Activated T-helper 2 cell treated with anti-CD3 and anti-CD28 coated beads, Interferon-gamma antibody, Interleukin-2, Interleukin-4, amounts not matched to agents 10 μg/mL and 5 μg/mL and 100 μg/mL, durations not matched to agents 14 hours and 24 hours and 36 hours (primary cell): ENCODE measurements at regions of chr3 and their contacts with region 1.

Region 1: GRCh38 chr3:129120254-129121004 is 1.2 kb downstream of the RAB43 start:
- DNase-seq: peak; percentile 93
- H3K4me3 Mint-ChIP-seq: peak overlapping the region; percentile 94
- H3K27ac Mint-ChIP-seq: peak overlapping the region; percentile 97
- H3K4me1 Mint-ChIP-seq: peaks cover 52% of the 10 kb centered on the region
- H3K27me3 Mint-ChIP-seq: no peaks in the 10 kb centered on the region

Region 2: GRCh38 chr3:128804017-128804810 is 316.2 kb before region 1 on chr3:
- intact Hi-C with region 1: loop called (anchors 5 kb)
- DNase-seq: peak; percentile 69
- H3K4me3 Mint-ChIP-seq: peak overlapping the region; percentile 58
- H3K27ac Mint-ChIP-seq: peak overlapping the region; percentile 88
- H3K4me1 Mint-ChIP-seq: peaks cover 75% of the 10 kb centered on the region
- H3K27me3 Mint-ChIP-seq: no peaks in the 10 kb centered on the region

Region 3: GRCh38 chr3:129026728-129027543 is 93.5 kb before region 1 on chr3:
- intact Hi-C with region 1: loop called (anchors 5 kb)
- DNase-seq: peak; percentile 92
- H3K4me3 Mint-ChIP-seq: peak overlapping the region; percentile 72
- H3K27ac Mint-ChIP-seq: peak overlapping the region; percentile 76
- H3K4me1 Mint-ChIP-seq: peaks cover 13% of the 10 kb centered on the region
- H3K27me3 Mint-ChIP-seq: no peaks in the 10 kb centered on the region

Region 4: DNA sequence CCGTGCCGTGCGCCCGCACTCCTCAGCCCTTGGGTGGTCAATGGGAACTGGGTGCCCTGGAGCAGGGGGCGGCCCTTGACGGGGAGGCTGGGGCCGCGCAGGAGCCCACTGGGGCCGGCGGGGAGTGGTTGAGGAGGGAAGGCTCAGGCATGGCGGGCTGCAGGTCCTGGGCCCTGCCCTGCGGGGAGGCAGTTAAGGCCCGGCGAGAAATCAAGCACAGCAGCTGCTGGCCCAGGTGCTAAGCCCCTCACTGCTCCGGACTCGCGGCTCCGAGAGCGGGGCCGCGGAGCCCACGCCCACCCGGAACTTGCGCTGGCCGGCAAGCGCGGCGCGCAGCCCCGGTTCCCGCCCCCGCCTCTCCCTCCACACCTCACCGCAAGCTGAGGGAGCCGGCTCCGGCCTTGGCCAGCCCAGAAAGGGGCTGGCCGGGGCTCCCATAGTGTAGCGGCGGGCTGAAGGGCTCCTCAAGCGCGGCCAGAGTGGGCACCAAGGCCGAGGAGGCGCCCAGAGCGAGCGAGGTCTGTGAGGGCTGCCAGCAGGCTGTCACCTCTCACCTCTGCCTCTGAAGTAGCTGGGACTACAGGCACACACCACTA is 52.0 kb before region 1 on chr3:
- intact Hi-C with region 1: loop called (anchors 5 kb)
- DNase-seq: no peak
- H3K4me3 Mint-ChIP-seq: peak overlapping the region; percentile 70
- H3K27ac Mint-ChIP-seq: no peak overlapping the region
- H3K4me1 Mint-ChIP-seq: peaks cover 5% of the 10 kb centered on the region
- H3K27me3 Mint-ChIP-seq: peaks cover 10% of the 10 kb centered on the region

Region 5: DNA sequence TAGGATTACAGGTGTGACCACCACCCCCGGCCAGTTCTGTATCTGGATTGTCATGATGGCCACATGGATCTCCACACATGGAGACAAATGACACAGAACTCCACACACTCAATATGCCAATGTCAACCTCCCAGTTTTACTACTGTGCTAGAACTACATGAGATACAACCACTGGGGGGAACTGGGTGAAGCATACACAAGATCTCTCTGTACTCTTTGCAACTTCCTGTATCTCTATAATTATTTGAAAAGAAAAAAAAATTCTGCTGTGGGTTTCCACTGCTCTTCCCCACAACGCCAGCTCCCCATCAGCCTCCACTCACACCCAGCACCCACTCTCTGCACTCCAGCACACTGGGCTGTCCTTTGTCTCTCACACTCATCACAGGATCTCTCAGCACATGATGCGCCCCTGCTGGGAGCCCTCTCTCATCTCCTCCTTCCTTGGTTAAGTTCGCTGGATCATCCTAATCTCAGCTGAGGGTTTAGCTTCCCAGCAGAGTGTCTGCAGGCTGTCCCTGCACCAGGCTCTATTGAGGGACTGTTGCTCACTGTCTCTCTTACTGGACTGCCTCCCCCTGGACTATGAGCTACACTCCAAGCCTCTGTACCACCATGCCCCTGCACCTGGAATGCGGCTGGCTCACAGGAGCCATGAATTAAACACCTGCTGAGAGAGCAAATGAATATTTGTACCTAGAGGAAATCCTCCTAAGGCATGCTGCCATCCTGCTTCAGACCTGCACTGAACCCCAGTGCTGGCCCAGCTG is 11.9 kb after region 1 on chr3:
- intact Hi-C with region 1: no loop called
- DNase-seq: no peak
- H3K4me3 Mint-ChIP-seq: no peak overlapping the region
- H3K27ac Mint-ChIP-seq: peak overlapping the region; percentile 48
- H3K4me1 Mint-ChIP-seq: peaks cover 2% of the 10 kb centered on the region
- H3K27me3 Mint-ChIP-seq: no peaks in the 10 kb centered on the region

Region 6: GRCh38 chr3:129183569-129184395 is 63.4 kb after region 1 on chr3 and contains the start of gene CNBP:
- intact Hi-C with region 1: loop called (anchors 2 kb)
- DNase-seq: peak; percentile 91
- H3K4me3 Mint-ChIP-seq: peak within 1 kb of the TSS; percentile 97
- H3K27ac Mint-ChIP-seq: peak within 1 kb of the TSS; percentile 98
- H3K4me1 Mint-ChIP-seq: peaks cover 42% of the 10 kb centered on the region
- H3K27me3 Mint-ChIP-seq: no peaks in the 10 kb centered on the region
- total RNA-seq, gene CNBP: 351 TPM in 2 replicates

Region 7: DNA sequence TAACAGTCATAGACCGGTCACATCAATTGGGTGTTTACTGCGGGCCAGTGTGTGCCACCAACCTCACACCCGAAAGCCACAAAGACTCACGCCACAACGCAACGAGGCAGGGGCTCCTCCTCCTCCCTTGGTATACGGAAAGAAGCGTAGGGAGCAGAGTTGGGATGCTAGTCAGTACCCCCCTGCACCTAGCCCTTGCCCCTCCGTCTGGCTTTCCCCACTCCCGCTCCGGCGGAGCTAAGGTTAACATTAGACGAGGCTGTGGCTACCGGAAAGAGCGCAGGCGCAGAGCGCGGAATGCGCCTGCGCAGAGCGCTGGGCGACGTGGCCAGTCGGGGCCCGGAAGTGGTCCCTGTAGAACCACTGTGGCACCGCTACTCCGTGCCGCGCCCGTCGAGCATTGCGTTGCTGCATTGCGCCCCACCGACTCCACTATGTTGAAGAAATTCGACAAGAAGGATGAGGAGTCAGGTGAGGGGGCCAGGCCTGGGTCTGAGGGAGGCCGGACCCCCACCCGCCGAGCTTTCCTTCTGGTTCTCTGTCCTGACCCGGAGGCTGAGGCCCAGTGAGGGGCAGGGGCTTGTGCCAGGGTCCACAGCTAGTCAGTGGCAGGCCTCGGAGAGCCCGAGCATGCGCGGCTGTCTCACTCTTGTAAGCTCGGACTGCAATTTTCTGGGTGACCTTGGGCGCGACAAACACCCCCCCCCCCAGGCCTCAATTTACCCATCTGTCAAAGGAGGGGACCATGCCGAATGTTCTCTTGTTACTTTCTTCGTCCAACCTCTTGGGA is 129.0 kb after region 1 on chr3 and contains the start of gene COPG1:
- intact Hi-C with region 1: loop called (anchors 1 kb)
- DNase-seq: peak; percentile 88
- H3K4me3 Mint-ChIP-seq: peak within 1 kb of the TSS; percentile 99
- H3K27ac Mint-ChIP-seq: peak within 1 kb of the TSS; percentile 98
- H3K4me1 Mint-ChIP-seq: peaks cover 34% of the 10 kb centered on the region
- H3K27me3 Mint-ChIP-seq: no peaks in the 10 kb centered on the region
- total RNA-seq, gene COPG1: 182 and 187 TPM in 2 replicates

Region 8: GRCh38 chr3:129439817-129440617 is 319.6 kb after region 1 on chr3 and contains the starts of genes IFT122 and MBD4:
- intact Hi-C with region 1: loop called (anchors 5 kb)
- DNase-seq: peak; percentile 100
- H3K4me3 Mint-ChIP-seq: peak within 1 kb of the TSS; percentile 92
- H3K27ac Mint-ChIP-seq: peak within 1 kb of the TSS; percentile 99
- H3K4me1 Mint-ChIP-seq: peaks cover 54% of the 10 kb centered on the region
- H3K27me3 Mint-ChIP-seq: no peaks in the 10 kb centered on the region
- total RNA-seq, gene IFT122: 15.7 and 17.6 TPM in 2 replicates
- total RNA-seq, gene MBD4: 41.9 and 45.9 TPM in 2 replicates